T-cell (primary cell): ENCODE measurements at regions of chr14 and their contacts with region 1.

Region 1: GRCh38 chr14:77097700-77098528 is at the start of gene CIPC:
- DNase-seq: peak; percentile 96 to 99 (median 98)
- ATAC-seq: peak; percentile 85 to 95 (median 92)
- H3K4me3 ChIP-seq: peak within 1 kb of the TSS; percentile 71 to 99
- H3K4me3 Mint-ChIP-seq: peak within 1 kb of the TSS; percentile 88 to 97 (median 97)
- H3K27ac ChIP-seq: peak within 1 kb of the TSS; percentile 96
- H3K27ac Mint-ChIP-seq: peak within 1 kb of the TSS; percentile 96 to 98
- H3K4me1 ChIP-seq: peaks cover 11 to 19% of the 10 kb centered on the region in 2 experiments
- H3K4me1 Mint-ChIP-seq: peaks cover 40 to 59% (median 50%) of the 10 kb centered on the region in 3 donors
- H3K27me3 ChIP-seq: no peaks in the 10 kb centered on the region
- H3K27me3 Mint-ChIP-seq: no peaks in the 10 kb centered on the region
- total RNA-seq, gene CIPC: 8.4 to 14.0 (median 11.8) TPM

Region 2: GRCh38 chr14:77040059-77040740 is 57.7 kb before region 1 on chr14:
- CTCF ChIA-PET with region 1: interaction called in 1 of 2 experiments, 10 read pairs
- POLR2A ChIA-PET with region 1: interaction called in 1 of 2 experiments, 3 read pairs
- DNase-seq: peak; percentile 95 to 99 (median 98)
- ATAC-seq: peak; percentile 80 to 86 (median 82)
- H3K4me3 ChIP-seq: peak overlapping the region; percentile 39 to 44
- H3K4me3 Mint-ChIP-seq: peak overlapping the region; percentile 79 to 83 (median 81)
- H3K27ac ChIP-seq: peak overlapping the region; percentile 95
- H3K27ac Mint-ChIP-seq: peak overlapping the region; percentile 97 to 99
- H3K4me1 ChIP-seq: peaks cover 46 to 84% of the 10 kb centered on the region in 2 experiments
- H3K4me1 Mint-ChIP-seq: peaks cover 86 to 94% (median 86%) of the 10 kb centered on the region in 3 donors
- H3K27me3 ChIP-seq: no peaks in the 10 kb centered on the region
- H3K27me3 Mint-ChIP-seq: no peaks in the 10 kb centered on the region

Region 3: DNA sequence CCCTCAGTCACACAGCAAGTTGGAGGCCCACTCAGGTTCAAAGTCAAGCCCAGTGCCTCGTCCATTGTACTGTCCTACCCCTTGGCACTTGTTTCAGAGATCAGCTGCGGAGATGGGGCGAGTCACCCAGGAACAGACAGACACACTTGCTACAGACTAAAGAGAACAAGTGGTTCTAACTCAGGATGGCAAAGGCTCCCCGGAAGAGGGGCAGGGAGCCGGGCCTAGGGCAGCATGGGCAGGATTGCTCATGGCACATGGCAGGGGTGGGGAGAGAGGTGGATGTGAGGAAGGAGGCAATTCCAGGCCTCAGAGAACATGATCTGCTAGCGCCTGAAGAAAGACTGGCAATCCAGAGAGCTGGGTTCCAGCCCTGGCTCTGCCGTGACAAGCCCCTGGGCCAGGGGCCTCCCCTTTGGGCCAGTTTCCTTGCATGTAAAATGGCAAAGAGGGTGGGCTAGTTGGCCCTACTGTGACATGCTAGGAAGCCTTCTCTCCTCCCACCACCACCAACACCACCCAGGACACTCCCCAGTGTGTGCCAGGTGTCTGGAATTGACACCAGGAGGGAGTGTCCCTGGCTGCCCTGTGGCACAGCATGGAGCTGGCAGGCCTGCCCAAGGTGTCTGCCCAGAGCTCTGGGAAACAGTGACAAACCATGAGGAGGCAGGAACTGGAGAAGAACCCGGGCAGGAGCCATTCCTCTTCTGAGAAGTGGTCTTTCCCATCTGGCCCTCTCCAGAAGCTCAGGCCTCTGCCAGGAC is 45.5 kb before region 1 on chr14:
- CTCF ChIA-PET with region 1: no interaction called
- POLR2A ChIA-PET with region 1: no interaction called
- DNase-seq: no peak
- ATAC-seq: no peak
- H3K4me3 ChIP-seq: no peak overlapping the region
- H3K4me3 Mint-ChIP-seq: no peak overlapping the region
- H3K27ac ChIP-seq: no peak overlapping the region
- H3K27ac Mint-ChIP-seq: no peak overlapping the region
- H3K4me1 ChIP-seq: peaks cover 0 to 21% of the 10 kb centered on the region in 2 experiments
- H3K4me1 Mint-ChIP-seq: peaks cover 11 to 34% (median 15%) of the 10 kb centered on the region in 3 donors
- H3K27me3 ChIP-seq: no peaks in the 10 kb centered on the region
- H3K27me3 Mint-ChIP-seq: no peaks in the 10 kb centered on the region

Region 4: DNA sequence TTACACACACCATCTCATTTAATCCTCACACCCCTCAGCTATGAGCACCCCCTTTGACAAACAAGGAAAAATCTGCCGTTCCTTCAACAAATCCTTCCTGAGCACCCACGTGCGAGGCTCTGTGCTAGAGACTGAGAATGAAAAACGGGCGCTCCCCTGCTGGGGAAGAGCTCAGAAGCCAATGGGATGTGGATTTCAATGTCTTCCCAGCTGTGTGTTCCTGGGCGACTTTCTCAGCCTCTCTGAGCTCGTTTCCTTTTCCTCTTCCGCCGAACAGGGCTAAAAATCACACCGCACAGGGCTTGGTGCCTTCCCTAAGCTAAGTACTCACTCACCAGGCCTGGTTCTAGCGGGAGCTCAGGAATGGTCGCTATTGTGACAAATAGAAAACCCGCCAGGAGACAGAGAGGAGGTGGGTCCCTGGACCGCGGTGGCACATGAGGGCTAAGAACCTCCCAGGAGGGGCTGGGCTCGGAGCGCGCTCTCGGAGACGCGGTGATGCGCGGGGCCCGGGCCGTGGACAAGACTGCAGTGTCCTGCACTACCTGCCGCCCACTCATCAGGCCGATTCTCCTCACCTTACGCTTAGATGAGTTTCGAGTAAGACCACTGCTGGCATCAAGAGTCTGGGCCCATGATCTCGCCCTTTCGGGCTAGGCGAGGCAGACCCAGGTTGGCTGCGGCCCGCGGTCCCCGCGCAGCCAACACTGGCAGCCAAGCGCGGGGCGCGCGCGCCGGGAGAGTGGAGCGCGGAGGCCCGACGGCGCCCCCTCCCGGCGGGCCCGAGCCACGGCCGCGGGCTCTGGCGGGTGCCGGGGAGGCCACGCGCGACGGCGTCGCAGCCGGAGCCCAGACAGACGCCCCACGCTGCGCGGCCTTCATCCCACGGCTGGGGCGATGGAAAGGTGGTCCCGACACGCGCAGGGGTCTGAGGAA is 26.7 kb after region 1 on chr14:
- CTCF ChIA-PET with region 1: interaction called, 4 to 19 read pairs
- POLR2A ChIA-PET with region 1: interaction called in 1 of 2 experiments, 3 read pairs
- DNase-seq: peak; percentile 25 to 85 (median 58)
- ATAC-seq: peak; percentile 82 to 87 (median 84)
- H3K4me3 ChIP-seq: peak overlapping the region; percentile 63 to 64
- H3K4me3 Mint-ChIP-seq: peak overlapping the region; percentile 79 to 83 (median 80)
- H3K27ac ChIP-seq: peak overlapping the region; percentile 52
- H3K27ac Mint-ChIP-seq: peak overlapping the region; percentile 61 to 97
- H3K4me1 ChIP-seq: peaks cover 12 to 59% of the 10 kb centered on the region in 2 experiments
- H3K4me1 Mint-ChIP-seq: peaks cover 40 to 55% (median 49%) of the 10 kb centered on the region in 3 donors
- H3K27me3 ChIP-seq: peaks cover 2 to 47% of the 10 kb centered on the region in 2 experiments
- H3K27me3 Mint-ChIP-seq: peaks cover 7 to 36% of the 10 kb centered on the region in 2 donors

Region 5: GRCh38 chr14:77177702-77178101 is 79.8 kb after region 1 on chr14:
- CTCF ChIA-PET with region 1: no interaction called
- POLR2A ChIA-PET with region 1: no interaction called
- DNase-seq: no peak
- ATAC-seq: no peak
- H3K4me3 ChIP-seq: no peak overlapping the region
- H3K4me3 Mint-ChIP-seq: no peak overlapping the region
- H3K27ac ChIP-seq: no peak overlapping the region
- H3K27ac Mint-ChIP-seq: no peak overlapping the region
- H3K4me1 ChIP-seq: peaks cover 3 to 19% of the 10 kb centered on the region in 2 experiments
- H3K4me1 Mint-ChIP-seq: peaks cover 11 to 12% (median 12%) of the 10 kb centered on the region in 3 donors
- H3K27me3 ChIP-seq: peaks cover 0 to 31% of the 10 kb centered on the region in 2 experiments
- H3K27me3 Mint-ChIP-seq: peaks cover 24 to 27% of the 10 kb centered on the region in 2 donors